ENCODE measurements at regions of chr1 and their contacts with region 1.

Region 1: GRCh38 chr1:94648225-94649007 is 106.9 kb upstream of the F3 start:
- DNase-seq: peak; percentile 90 to 91
- H3K4me3 ChIP-seq: peak overlapping the region in 1 of 2 donors; percentile 8
- H3K27ac ChIP-seq: peak overlapping the region; percentile 68 to 74
- H3K4me1 ChIP-seq: peaks cover 0 to 19% (median 8%) of the 10 kb centered on the region in 4 donors
- H3K27me3 ChIP-seq: no peaks in the 10 kb centered on the region
- CTCF ChIP-seq: no peak

Region 2: DNA sequence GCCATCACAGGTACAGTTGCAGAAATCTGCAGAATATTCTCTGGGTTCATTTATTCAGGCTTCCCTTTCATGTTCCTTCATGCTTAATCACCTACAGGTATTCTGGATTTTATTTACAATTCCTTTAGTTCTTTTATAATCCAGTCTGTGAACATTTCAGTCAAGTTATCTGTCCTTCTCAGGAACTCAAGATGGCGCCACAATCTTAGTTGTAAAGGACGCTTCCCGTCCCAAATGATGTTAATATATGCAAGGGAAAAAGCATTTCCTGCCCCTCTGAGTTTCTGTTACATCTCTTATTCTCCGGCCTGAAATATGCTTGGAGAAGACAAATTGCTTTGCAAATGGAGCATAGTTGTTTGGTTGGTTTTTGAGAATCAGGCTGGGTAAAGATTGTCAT is 126.1 kb before region 1 on chr1:
- intact Hi-C with region 1: no loop called
- DNase-seq: no peak
- H3K4me3 ChIP-seq: no peak overlapping the region
- H3K27ac ChIP-seq: no peak overlapping the region
- H3K4me1 ChIP-seq: no peaks in the 10 kb centered on the region
- H3K27me3 ChIP-seq: no peaks in the 10 kb centered on the region
- CTCF ChIP-seq: peak; percentile 53 to 58

Region 3: GRCh38 chr1:94792473-94793295 is 144.3 kb after region 1 on chr1:
- intact Hi-C with region 1: loop called (anchors 10 kb)
- DNase-seq: no peak
- H3K4me3 ChIP-seq: no peak overlapping the region
- H3K27ac ChIP-seq: peak overlapping the region; percentile 61 to 67
- H3K4me1 ChIP-seq: peaks cover 0 to 34% (median 9%) of the 10 kb centered on the region in 4 donors
- H3K27me3 ChIP-seq: no peaks in the 10 kb centered on the region
- CTCF ChIP-seq: peak; percentile 22 to 23

Region 4: GRCh38 chr1:94805912-94806311 is 157.5 kb after region 1 on chr1:
- intact Hi-C with region 1: no loop called
- DNase-seq: peak in 1 of 2 donors; percentile 44
- H3K4me3 ChIP-seq: no peak overlapping the region
- H3K27ac ChIP-seq: no peak overlapping the region
- H3K4me1 ChIP-seq: peaks cover 0 to 12% (median 6%) of the 10 kb centered on the region in 4 donors
- H3K27me3 ChIP-seq: no peaks in the 10 kb centered on the region
- CTCF ChIP-seq: peak; percentile 92 to 99

Measured in tibial artery (tissue), 4 donors.